H1 (cell line): ENCODE measurements at regions of chr10 and their contacts with region 1.

Region 1: DNA sequence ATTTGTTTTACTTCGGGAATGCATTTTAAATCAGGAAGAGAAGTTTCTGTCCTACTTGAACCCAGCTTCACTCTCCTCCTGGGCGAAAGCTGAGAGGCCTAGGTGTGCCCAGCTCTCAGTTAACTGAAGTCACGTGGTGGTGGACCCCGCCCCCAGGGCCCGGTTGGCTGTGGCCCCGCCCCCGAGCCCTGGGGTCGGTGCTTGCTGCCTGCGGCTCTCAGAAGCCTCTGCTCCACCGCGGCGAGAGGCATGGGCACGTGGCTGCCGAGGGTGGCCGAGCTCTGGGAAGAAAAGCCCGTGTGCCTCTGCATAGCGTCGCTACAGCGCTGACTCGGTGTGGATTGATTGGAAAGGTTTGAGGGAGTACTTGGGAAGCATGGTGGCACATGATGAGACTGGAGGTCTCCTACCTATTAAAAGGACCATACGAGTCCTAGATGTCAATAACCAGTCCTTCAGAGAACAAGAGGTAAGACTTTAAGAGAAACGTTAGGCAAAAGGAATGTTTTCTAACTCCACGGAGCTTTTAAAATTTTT is 34.1 kb downstream of the NET1 start:
- DNase-seq: peak; percentile 87 to 97
- H3K4me3 ChIP-seq: peak overlapping the region; percentile 19 to 62 (median 46); a peak in 7 of 8 replicates
- H3K27ac ChIP-seq: 0 out of 2 replicates have a peak overlapping the region, but pooled peaks have one; percentile 26
- H3K4me1 ChIP-seq: peaks cover 2 to 3% (median 2%) of the 10 kb centered on the region in 4 experiments; a peak in 4 of 7 replicates
- H3K27me3 ChIP-seq: no peaks in the 10 kb centered on the region
- CTCF ChIP-seq: no peak
- EP300 ChIP-seq: no peak
- POLR2A ChIP-seq: peak; percentile 92 to 93
- RAD21 ChIP-seq: peak; percentile 3 to 42; a peak in 3 of 4 replicates

Region 2: DNA sequence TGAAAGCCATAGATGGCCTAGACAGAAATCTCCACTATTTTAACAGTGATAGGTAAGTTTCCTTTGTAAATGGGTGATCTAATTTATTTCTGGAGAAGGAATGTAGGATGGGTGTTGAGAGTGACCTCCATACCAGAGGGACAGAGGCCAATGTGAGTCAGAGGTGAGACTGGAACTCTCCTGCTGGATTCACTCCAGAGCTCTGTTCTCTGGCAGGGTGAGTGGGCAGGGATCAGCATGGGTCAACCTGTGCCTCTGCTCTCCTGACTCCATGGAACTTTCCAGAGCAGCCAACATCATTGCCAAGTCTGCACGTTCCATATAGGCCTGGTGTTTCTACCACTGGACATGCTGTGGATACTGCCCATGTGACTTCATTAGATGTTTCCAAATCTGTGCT is 340.8 kb before region 1 on chr10:
- CTCF ChIA-PET with region 1: no interaction called
- POLR2A ChIA-PET with region 1: no interaction called
- DNase-seq: no peak
- H3K4me3 ChIP-seq: no peak overlapping the region
- H3K27ac ChIP-seq: no peak overlapping the region
- H3K4me1 ChIP-seq: no peaks in the 10 kb centered on the region
- H3K27me3 ChIP-seq: no peaks in the 10 kb centered on the region
- CTCF ChIP-seq: no peak
- EP300 ChIP-seq: no peak
- POLR2A ChIP-seq: no peak
- RAD21 ChIP-seq: no peak

Region 3: GRCh38 chr10:5334196-5334880 is 112.1 kb before region 1 on chr10:
- CTCF ChIA-PET with region 1: no interaction called
- POLR2A ChIA-PET with region 1: no interaction called
- DNase-seq: no peak
- H3K4me3 ChIP-seq: no peak overlapping the region
- H3K27ac ChIP-seq: no peak overlapping the region
- H3K4me1 ChIP-seq: no peaks in the 10 kb centered on the region
- H3K27me3 ChIP-seq: no peaks in the 10 kb centered on the region
- CTCF ChIP-seq: no peak
- EP300 ChIP-seq: no peak
- POLR2A ChIP-seq: no peak
- RAD21 ChIP-seq: no peak

Region 4: DNA sequence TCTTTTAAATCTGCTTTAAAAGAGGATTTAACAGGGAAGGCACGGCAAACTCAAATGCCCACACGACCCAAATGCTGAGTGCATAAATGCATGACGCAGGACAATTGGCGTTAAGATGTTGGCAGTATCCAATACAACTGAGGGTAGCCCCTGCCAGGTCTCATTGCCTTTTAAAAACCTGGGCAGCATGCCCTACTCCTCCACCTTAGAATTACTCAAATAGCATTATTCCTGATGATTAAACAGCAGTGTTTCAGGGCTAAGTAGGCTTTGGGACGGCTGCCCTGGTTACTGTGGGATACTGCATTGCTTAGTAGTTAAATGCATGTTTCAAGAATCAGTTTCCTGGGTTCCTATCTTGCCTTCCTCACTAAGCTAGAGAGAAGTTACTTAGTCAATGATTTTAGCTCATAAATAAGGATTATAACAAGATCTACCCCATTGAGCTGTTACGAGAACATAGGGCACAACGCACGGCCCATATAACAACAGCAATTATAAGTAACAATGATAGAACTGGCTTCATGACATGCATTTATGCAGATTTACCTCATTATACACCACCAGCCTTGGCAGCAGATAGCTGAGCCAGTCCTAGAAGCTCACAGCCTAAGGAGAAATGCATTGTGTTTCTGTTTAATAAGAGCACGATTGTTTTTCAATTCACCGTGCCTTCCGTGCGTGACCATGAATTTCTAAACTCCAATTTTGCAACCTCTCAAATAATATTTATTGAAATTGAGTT is 49.7 kb before region 1 on chr10:
- CTCF ChIA-PET with region 1: no interaction called
- POLR2A ChIA-PET with region 1: no interaction called
- DNase-seq: no peak
- H3K4me3 ChIP-seq: no peak overlapping the region
- H3K27ac ChIP-seq: no peak overlapping the region
- H3K4me1 ChIP-seq: peaks cover 0 to 3% (median 0%) of the 10 kb centered on the region in 4 experiments; a peak in 1 of 7 replicates
- H3K27me3 ChIP-seq: no peaks in the 10 kb centered on the region
- CTCF ChIP-seq: no peak
- EP300 ChIP-seq: no peak
- POLR2A ChIP-seq: no peak
- RAD21 ChIP-seq: no peak

Region 5: DNA sequence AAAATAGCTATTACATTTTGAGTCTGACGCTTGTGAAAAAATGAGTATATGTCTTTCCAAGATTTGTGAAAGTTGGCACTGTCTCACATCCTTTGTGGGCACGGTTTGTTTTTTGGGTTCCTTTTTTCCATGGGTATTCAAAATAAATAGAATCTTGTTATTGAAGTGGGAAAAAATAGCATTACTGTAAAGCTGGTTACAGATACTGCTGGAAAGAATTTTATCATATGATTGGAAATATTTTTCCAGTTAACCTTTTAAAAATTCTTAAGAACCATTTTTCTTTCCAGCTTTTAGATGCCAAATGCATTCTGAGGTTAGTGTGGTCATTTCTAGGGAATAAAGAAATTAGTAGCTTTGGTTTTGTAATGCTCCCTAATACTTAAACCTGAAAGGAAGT is 22.7 kb before region 1 on chr10:
- CTCF ChIA-PET with region 1: interaction called, 28 read pairs
- POLR2A ChIA-PET with region 1: interaction called, 3 read pairs
- DNase-seq: no peak
- H3K4me3 ChIP-seq: no peak overlapping the region
- H3K27ac ChIP-seq: no peak overlapping the region
- H3K4me1 ChIP-seq: peaks cover 0 to 4% (median 1%) of the 10 kb centered on the region in 4 experiments; a peak in 3 of 7 replicates
- H3K27me3 ChIP-seq: no peaks in the 10 kb centered on the region
- CTCF ChIP-seq: no peak
- EP300 ChIP-seq: no peak
- POLR2A ChIP-seq: no peak
- RAD21 ChIP-seq: no peak

Region 6: DNA sequence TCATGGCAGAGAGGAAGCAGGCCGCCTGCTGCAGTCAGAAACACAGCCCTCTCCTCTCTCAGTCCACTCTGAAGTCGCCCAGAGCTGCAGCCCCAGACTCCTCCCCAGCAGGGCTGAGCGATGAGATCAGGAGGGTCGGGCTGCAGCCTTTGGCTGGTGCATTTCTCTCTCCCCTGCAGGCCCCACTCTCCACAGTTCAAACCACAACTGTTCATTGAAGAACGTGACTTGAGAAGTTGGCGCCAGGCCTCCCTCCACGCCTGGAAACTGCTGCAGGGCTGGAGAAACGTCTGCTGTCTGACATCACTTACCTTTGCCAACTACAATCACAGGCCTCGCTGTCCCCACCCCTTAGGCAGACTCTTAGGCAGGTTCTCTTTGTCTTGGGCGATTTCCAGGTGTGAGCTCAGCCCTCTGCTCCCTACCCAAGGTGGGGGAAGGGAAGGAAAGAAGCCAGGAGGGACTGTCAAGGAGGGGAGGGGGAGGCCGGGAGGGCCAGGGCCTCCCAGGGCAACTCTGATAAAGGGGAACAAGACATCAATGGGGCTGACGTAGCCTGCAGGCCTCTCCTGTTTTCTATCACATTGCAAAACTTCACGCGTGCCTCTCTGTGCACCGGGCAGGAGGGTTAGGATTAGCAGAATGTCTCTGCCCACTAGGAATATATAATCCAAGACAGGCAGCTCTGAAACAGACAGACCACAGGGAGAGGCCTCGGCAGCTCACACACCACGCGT is 20.1 kb after region 1 on chr10:
- CTCF ChIA-PET with region 1: interaction called, 23 read pairs
- POLR2A ChIA-PET with region 1: interaction called, 44 read pairs
- DNase-seq: peak; percentile 71 to 72
- H3K4me3 ChIP-seq: peak overlapping the region in 1 of 4 experiments; percentile 23; a peak in 1 of 8 replicates
- H3K27ac ChIP-seq: peak overlapping the region; percentile 82
- H3K4me1 ChIP-seq: peaks cover 8 to 18% (median 14%) of the 10 kb centered on the region in 4 experiments
- H3K27me3 ChIP-seq: peaks cover 0 to 4% (median 0%) of the 10 kb centered on the region in 4 experiments; a peak in 1 of 7 replicates
- CTCF ChIP-seq: no peak
- EP300 ChIP-seq: no peak
- POLR2A ChIP-seq: peak in 1 of 2 experiments; percentile 53; a peak in 1 of 3 replicates
- RAD21 ChIP-seq: peak; percentile 16 to 29; a peak in 1 of 4 replicates

Region 7: GRCh38 chr10:5485948-5486852 is 39.7 kb after region 1 on chr10:
- CTCF ChIA-PET with region 1: interaction called, 10 read pairs
- POLR2A ChIA-PET with region 1: interaction called, 7 read pairs
- DNase-seq: no peak
- H3K4me3 ChIP-seq: no peak overlapping the region
- H3K27ac ChIP-seq: no peak overlapping the region
- H3K4me1 ChIP-seq: peaks cover 0 to 14% (median 4%) of the 10 kb centered on the region in 4 experiments; a peak in 5 of 7 replicates
- H3K27me3 ChIP-seq: no peaks in the 10 kb centered on the region
- CTCF ChIP-seq: no peak
- EP300 ChIP-seq: no peak
- POLR2A ChIP-seq: no peak
- RAD21 ChIP-seq: no peak

Region 8: DNA sequence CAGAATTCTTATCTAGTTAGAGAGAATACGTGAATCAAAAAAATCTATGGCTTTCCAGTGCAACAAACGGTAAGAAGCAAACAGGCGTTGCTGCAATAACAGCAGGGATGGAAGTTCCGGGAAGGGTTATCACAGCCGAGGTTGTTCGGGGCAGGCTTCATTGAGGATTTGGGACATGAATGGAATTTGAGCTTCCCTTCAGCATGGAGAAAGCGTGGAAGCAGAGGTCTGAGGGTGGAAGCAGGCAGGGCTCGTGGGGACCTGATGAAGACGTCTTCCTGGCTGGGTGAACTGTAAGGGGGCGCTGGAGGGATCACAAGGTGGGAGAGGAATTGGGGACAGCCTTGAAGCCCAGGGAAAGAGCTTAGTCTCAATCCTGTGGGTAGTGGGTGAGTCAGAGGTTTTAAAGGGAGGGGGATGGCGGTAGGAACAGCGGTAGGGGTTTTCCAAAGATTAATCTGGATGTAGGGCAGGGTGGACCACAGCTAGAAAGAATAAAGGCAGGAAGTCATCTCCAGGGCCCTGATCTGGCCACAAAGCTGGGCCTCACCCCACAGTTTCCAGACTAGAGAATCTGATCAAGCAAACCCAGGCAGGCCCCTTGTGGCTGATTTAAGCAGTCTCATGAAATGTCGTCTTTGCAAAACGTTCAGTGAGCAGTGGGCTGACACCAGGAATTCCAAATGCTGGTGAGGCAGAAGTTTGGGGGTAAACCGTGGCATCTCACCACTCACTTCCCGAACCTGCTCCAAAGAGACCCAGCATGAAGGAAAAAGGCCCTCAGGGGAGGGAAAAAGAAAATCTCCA is 143.5 kb after region 1 on chr10:
- CTCF ChIA-PET with region 1: interaction called, 24 read pairs
- POLR2A ChIA-PET with region 1: interaction called, 5 read pairs
- DNase-seq: no peak
- H3K4me3 ChIP-seq: no peak overlapping the region
- H3K27ac ChIP-seq: no peak overlapping the region
- H3K4me1 ChIP-seq: peaks cover 8 to 24% (median 17%) of the 10 kb centered on the region in 4 experiments
- H3K27me3 ChIP-seq: no peaks in the 10 kb centered on the region; a peak in 1 of 7 replicates
- CTCF ChIP-seq: peak in 1 of 3 experiments; percentile 20; a peak in 1 of 4 replicates
- EP300 ChIP-seq: no peak
- POLR2A ChIP-seq: no peak
- RAD21 ChIP-seq: no peak